ENCODE measurements at regions of chr3 and their contacts with region 1.

Region 1: DNA sequence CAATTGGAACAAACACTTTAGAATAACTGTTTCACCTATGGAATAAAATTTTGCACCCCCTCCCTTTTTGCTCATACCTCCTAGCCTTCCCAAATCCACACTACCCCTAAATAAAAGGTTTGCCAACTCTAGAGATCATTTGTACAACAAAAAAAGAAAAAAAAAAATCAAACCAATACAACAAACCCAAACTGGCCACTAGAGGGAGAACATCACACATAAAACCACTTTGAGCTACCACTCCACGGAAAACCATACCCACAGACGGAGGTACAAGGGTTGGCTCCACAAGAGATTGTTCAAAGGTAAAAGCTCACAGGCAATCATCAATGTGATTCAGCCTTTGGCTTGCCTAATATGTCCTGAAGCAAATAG is 47.6 kb downstream of the SETMAR start:
- DNase-seq: peak in 1 of 3 donors; percentile 67
- ATAC-seq: peak; percentile 92 to 98 (median 95)
- H3K4me3 ChIP-seq: peak overlapping the region in 1 of 3 donors; percentile 31
- H3K27ac ChIP-seq: peak overlapping the region in 2 of 3 donors; percentile 5 to 74
- H3K4me1 ChIP-seq: peaks cover 0 to 13% (median 5%) of the 10 kb centered on the region in 4 donors
- H3K27me3 ChIP-seq: no peaks in the 10 kb centered on the region
- CTCF ChIP-seq: peak; percentile 69 to 84 (median 70)
- POLR2A ChIP-seq: no peak

Region 2: DNA sequence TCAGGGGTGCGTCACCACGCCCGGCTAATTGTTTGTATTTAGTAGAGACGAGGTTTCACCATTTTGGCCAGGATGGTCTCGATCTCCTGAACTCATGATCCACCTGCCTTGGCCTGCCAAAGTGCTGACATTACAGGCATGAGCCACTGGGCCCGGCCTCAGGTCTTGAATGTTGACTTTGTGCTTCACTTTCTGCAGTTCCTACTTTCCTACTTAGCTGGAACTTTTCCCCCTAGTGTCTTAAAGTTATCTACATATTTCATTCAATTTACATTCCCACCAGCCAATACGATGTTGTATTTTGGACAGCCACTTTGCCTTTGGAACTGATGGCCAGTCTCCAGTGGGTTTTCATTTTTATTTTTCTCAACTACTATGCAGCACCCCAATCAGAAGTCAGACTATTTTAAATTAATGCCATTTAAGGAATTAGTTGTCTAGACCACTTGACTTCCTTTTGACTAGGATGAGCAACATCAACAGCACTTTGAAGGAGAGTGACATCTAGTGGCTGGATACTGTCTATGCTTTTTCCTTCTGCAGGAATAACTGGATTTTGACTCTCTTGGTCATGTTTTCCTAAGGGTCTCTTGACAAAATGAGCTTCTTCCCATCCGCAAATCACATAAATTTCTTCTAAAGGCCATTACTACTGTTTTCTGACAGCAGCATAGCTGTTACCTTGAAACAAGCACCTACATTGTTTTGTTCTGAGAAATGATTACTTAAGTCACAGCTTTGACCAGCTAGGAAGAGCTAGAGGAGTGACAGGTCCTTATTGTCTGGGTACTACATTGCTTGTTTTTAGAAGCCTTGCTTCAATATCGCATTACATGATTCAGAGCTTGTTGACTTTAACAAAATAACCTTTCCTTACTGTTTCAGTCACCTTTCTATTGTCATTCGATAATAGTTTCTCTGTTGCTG is 282.6 kb after region 1 on chr3:
- intact Hi-C with region 1: loop called in 1 of 2 experiments (anchors 5 kb)
- DNase-seq: no peak
- ATAC-seq: peak; percentile 82 to 93 (median 88)
- H3K4me3 ChIP-seq: no peak overlapping the region
- H3K27ac ChIP-seq: no peak overlapping the region
- H3K4me1 ChIP-seq: no peaks in the 10 kb centered on the region
- H3K27me3 ChIP-seq: no peaks in the 10 kb centered on the region
- CTCF ChIP-seq: peak; percentile 79 to 90 (median 85)
- POLR2A ChIP-seq: no peak

Measured in right lobe of liver (tissue), 6 donors.